CD4-positive, alpha-beta memory T cell (primary cell): ENCODE measurements at regions of chr9 and their contacts with region 1.

Region 1: GRCh38 chr9:77916410-77916819 is 115.2 kb downstream of the GNAQ start:
- DNase-seq: no peak
- H3K4me3 ChIP-seq: no peak overlapping the region
- H3K4me3 Mint-ChIP-seq: peak overlapping the region in 1 of 8 donors; percentile 7
- H3K27ac ChIP-seq: no peak overlapping the region
- H3K27ac Mint-ChIP-seq: peak overlapping the region in 2 of 7 donors; percentile 53 to 70
- H3K4me1 ChIP-seq: peaks cover 9% of the 10 kb centered on the region
- H3K4me1 Mint-ChIP-seq: peaks cover 21 to 41% (median 34%) of the 10 kb centered on the region in 4 donors
- H3K27me3 ChIP-seq: no peaks in the 10 kb centered on the region
- H3K27me3 Mint-ChIP-seq: no peaks in the 10 kb centered on the region

Region 2: GRCh38 chr9:77841739-77842386 is 74.6 kb before region 1 on chr9:
- CTCF ChIA-PET with region 1: no interaction called
- POLR2A ChIA-PET with region 1: no interaction called
- intact Hi-C with region 1: loop called (anchors 10 kb)
- DNase-seq: peak in 2 of 5 donors; percentile 3 to 9
- H3K4me3 ChIP-seq: no peak overlapping the region
- H3K4me3 Mint-ChIP-seq: no peak overlapping the region
- H3K27ac ChIP-seq: no peak overlapping the region
- H3K27ac Mint-ChIP-seq: peak overlapping the region in 2 of 7 donors; percentile 13 to 39
- H3K4me1 ChIP-seq: no peaks in the 10 kb centered on the region
- H3K4me1 Mint-ChIP-seq: peaks cover 7 to 23% (median 10%) of the 10 kb centered on the region in 4 donors
- H3K27me3 ChIP-seq: no peaks in the 10 kb centered on the region
- H3K27me3 Mint-ChIP-seq: no peaks in the 10 kb centered on the region

Region 3: DNA sequence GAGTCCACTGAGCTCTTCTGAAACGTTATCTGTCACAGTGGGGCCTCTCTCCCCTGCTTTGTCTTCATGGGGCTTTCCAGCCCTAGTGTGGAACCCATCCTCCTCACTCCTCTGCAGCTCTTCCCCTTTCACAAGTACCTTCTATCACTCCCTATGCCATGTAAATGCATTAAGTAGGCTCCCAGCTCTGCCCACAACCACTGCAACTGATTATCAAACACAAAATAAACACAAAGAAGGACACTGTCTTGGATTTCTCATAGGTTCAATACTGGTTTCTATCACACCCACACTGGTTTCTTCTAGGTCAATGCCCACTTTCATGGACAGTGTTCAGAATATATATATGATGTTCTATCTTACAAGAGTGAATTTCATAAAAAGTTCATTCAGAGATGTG is 24.2 kb before region 1 on chr9:
- CTCF ChIA-PET with region 1: no interaction called
- POLR2A ChIA-PET with region 1: no interaction called
- intact Hi-C with region 1: no loop called
- DNase-seq: no peak
- H3K4me3 ChIP-seq: no peak overlapping the region
- H3K4me3 Mint-ChIP-seq: no peak overlapping the region
- H3K27ac ChIP-seq: no peak overlapping the region
- H3K27ac Mint-ChIP-seq: peak overlapping the region in 4 of 7 donors; percentile 0 to 35 (median 30)
- H3K4me1 ChIP-seq: no peaks in the 10 kb centered on the region
- H3K4me1 Mint-ChIP-seq: peaks cover 16 to 30% (median 24%) of the 10 kb centered on the region in 4 donors
- H3K27me3 ChIP-seq: no peaks in the 10 kb centered on the region
- H3K27me3 Mint-ChIP-seq: no peaks in the 10 kb centered on the region